ENCODE measurements at regions of chr12 and their contacts with region 1.

Region 1: DNA sequence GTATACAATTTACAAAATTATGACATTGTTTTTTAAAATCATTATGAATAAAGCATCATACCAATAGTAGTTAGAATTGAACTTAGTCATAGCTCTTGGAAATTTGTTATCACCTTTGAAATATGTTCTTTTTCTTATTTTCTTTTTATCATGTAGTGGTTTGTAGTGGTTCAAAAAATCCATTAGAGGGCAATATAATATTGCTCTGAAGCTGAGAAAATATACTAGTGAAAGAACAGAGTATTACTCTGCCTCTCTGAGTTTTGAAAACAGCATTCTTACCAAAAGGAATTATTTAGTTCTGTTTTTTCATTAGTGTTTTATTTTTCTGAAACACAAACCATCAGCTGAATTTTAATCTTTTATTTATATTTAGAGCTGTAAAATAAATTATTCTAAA is 76.2 kb downstream of the PDZRN4 start:
- DNase-seq: no peak
- ATAC-seq: 0 out of 2 replicates have a peak, but pooled peaks have one; percentile 46
- H3K4me3 ChIP-seq: no peak overlapping the region
- H3K27ac ChIP-seq: no peak overlapping the region
- H3K4me1 ChIP-seq: no peaks in the 10 kb centered on the region
- H3K27me3 ChIP-seq: no peaks in the 10 kb centered on the region
- CTCF ChIP-seq: peak; percentile 26 to 55 (median 48); a peak in 4 of 6 replicates
- POLR2A ChIP-seq: no peak
- RAD21 ChIP-seq: peak; percentile 61

Region 2: GRCh38 chr12:40970320-40970907 is 293.9 kb before region 1 on chr12:
- CTCF ChIA-PET with region 1: interaction called, 9 read pairs
- POLR2A ChIA-PET with region 1: no interaction called
- RAD21 ChIA-PET with region 1: no interaction called
- intact Hi-C with region 1: loop called (anchors 10 kb)
- DNase-seq: peak; percentile 32
- ATAC-seq: peak; percentile 68
- H3K4me3 ChIP-seq: no peak overlapping the region
- H3K27ac ChIP-seq: no peak overlapping the region
- H3K4me1 ChIP-seq: no peaks in the 10 kb centered on the region
- H3K27me3 ChIP-seq: no peaks in the 10 kb centered on the region
- CTCF ChIP-seq: peak; percentile 24 to 56 (median 43); a peak in 4 of 6 replicates
- POLR2A ChIP-seq: no peak
- RAD21 ChIP-seq: peak; percentile 46

Region 3: DNA sequence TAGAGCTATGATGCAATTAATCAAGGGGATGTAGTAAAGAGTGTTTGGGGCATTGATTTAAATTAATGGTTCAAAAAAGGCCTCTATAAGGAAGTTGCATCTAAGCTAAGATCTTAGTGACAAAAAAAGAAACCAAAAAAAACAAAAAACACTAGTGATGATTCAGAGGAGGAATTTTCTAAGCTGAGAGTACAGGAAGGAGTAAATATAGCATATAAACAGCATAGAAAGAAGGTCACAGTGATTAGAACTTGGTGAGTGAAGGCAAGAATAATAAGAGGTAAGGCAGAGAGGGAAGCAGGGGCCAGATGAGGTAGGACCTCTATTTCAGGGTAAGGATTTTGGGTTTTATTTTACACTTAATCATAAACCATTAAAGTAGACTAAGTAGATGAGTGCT is 124.2 kb before region 1 on chr12:
- CTCF ChIA-PET with region 1: no interaction called
- POLR2A ChIA-PET with region 1: no interaction called
- RAD21 ChIA-PET with region 1: no interaction called
- intact Hi-C with region 1: no loop called
- DNase-seq: no peak
- ATAC-seq: no peak
- H3K4me3 ChIP-seq: no peak overlapping the region
- H3K27ac ChIP-seq: no peak overlapping the region
- H3K4me1 ChIP-seq: no peaks in the 10 kb centered on the region
- H3K27me3 ChIP-seq: no peaks in the 10 kb centered on the region
- CTCF ChIP-seq: no peak
- POLR2A ChIP-seq: no peak
- RAD21 ChIP-seq: no peak

Region 4: DNA sequence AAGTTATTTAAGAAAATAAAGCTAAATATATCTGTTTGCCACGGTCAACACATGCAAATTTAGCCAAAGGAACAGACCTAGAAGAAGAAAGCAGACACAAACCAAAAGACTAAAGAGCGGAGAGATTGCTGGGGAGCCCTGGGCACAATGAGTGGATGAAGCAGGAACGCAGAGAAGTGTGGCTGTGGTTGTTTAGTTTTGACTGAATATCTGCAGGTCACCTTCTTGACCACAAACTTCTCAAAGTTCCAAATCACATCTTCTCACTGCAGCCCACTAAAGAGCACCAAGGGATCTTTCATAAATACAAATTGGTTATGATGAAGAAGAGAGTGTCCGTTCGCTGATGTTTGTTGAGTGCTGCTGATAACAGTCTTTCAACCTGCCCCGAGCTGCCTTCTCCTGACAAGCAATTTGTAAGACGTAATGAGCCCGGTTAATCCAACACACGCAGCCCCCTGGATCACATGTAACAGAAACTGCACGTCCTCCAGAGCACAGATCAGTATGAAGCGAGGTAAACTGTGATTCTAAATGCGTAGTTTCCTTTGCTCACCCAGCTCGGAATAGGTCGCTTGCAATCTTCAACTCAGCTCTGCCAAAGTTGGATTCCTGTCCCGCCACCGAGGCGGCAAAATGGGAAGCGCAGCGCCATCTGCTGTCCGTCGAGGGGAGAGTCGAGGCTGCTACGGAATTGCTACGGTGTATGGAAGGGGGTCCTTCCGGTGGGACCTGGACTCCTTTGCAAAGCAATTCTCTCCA is 759.6 kb after region 1 on chr12:
- CTCF ChIA-PET with region 1: interaction called, 12 read pairs
- POLR2A ChIA-PET with region 1: no interaction called
- RAD21 ChIA-PET with region 1: no interaction called
- intact Hi-C with region 1: loop called (anchors 2 kb)
- DNase-seq: peak; percentile 44
- ATAC-seq: peak; percentile 97
- H3K4me3 ChIP-seq: peak overlapping the region; percentile 6 to 9; a peak in 1 of 4 replicates
- H3K27ac ChIP-seq: no peak overlapping the region
- H3K4me1 ChIP-seq: peaks cover 0 to 3% of the 10 kb centered on the region in 2 experiments; a peak in 1 of 4 replicates
- H3K27me3 ChIP-seq: no peaks in the 10 kb centered on the region
- CTCF ChIP-seq: peak; percentile 67 to 97 (median 94); a peak in 5 of 6 replicates
- POLR2A ChIP-seq: no peak
- RAD21 ChIP-seq: peak; percentile 88